Cardiac septum (tissue), 1 donor: ENCODE measurements at regions of chr1 and their contacts with region 1.

Region 1: DNA sequence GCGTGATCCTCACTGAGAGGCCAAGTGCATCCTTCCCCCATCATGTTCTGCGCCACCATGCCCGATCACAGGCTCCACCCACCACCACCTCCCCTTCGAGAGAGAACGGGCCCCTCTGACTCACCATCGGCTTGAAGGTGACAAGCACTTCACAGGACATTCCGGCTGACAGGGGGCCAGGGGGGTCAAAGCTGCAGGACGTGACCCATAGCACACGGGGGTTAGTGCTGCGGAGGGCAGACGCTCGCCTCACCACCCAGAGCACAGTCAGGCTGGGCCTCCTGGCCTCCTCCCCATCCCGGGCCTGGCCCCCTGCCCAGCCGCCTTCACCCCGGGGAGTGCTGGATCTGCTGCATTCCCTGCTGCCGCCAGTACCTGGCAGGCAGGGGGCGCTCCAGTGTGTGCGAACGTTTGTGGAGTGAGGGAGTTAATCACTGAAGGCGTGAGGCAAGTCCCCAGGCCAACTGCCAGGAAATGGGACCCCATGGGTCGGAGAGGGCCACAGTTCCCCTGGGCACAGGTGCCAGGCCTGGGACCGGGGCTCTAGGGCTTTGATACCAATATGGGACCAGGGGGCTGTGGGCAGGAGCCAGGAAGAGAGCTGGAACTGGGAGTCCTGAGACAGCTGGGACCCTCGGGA is 40.9 kb upstream of the TMEM52 start:
- DNase-seq: peak; percentile 88

Region 2: GRCh38 chr1:2019172-2019543 is 59.2 kb after region 1 on chr1 and contains the start of gene GABRD:
- intact Hi-C with region 1: loop called (anchors 5 kb)
- DNase-seq: no peak
- total RNA-seq, gene GABRD: 1.1 TPM

Region 3: DNA sequence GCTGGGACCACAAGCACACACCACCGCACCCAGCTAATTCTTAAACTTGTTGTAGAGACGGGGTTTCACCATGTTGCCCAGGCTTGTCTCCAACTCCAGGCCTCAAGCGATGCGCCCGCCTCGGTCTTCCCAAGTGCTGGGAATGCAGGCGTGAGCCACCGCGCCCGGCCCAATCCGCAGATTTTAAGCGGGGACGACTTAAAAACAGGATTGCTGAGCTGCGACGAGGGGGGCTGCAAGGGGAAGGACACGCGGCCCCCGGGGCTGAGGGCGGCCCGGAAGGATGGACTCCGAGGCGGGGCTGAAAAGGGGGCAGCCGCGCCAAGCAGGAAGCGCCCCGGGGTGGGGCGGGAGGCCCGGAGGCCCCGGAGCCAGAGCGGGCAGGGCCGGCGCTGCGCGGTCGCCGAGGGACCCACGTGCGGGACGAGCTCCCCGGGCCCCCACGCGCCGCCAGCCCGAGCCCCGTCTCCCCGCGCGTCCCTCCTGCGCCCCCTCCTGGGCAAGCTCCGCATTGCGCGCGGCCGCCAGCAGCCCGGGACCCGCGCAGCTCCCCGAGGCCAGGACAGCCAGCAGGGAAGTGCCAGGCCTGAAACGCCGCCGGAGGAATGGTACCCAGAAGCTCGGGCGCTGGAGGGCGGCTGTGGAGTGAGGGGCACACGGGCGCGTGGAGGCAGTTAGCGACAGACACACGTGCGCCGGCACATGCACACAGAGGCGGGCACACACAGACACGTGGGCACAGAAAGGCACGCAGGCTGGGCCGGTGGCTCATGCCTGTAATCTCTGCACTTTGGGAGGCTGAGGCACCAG is 84.8 kb after region 1 on chr1:
- intact Hi-C with region 1: loop called (anchors 1 kb)
- DNase-seq: peak; percentile 87

Region 4: GRCh38 chr1:2148691-2149090 is 188.7 kb after region 1 on chr1:
- intact Hi-C with region 1: no loop called
- DNase-seq: peak; percentile 87